AG04449 (cell line): ENCODE measurements at regions of chr4 and their contacts with region 1.

Region 1: GRCh38 chr4:41281038-41281634 is 24.4 kb downstream of the UCHL1 start:
- DNase-seq: peak; percentile 42
- H3K4me3 ChIP-seq: no peak overlapping the region
- CTCF ChIP-seq: peak; percentile 65

Region 2: GRCh38 chr4:41120297-41121217 is 160.6 kb before region 1 on chr4:
- CTCF ChIA-PET with region 1: no interaction called
- POLR2A ChIA-PET with region 1: no interaction called
- DNase-seq: no peak
- H3K4me3 ChIP-seq: no peak overlapping the region
- CTCF ChIP-seq: no peak

Region 3: GRCh38 chr4:41294445-41295062 is 13.4 kb after region 1 on chr4:
- CTCF ChIA-PET with region 1: interaction called, 21 read pairs
- POLR2A ChIA-PET with region 1: interaction called, 5 read pairs
- DNase-seq: no peak
- H3K4me3 ChIP-seq: no peak overlapping the region
- CTCF ChIP-seq: no peak

Region 4: GRCh38 chr4:41448934-41449333 is 167.8 kb after region 1 on chr4:
- CTCF ChIA-PET with region 1: no interaction called
- POLR2A ChIA-PET with region 1: no interaction called
- DNase-seq: no peak
- H3K4me3 ChIP-seq: no peak overlapping the region
- CTCF ChIP-seq: no peak

Region 5: DNA sequence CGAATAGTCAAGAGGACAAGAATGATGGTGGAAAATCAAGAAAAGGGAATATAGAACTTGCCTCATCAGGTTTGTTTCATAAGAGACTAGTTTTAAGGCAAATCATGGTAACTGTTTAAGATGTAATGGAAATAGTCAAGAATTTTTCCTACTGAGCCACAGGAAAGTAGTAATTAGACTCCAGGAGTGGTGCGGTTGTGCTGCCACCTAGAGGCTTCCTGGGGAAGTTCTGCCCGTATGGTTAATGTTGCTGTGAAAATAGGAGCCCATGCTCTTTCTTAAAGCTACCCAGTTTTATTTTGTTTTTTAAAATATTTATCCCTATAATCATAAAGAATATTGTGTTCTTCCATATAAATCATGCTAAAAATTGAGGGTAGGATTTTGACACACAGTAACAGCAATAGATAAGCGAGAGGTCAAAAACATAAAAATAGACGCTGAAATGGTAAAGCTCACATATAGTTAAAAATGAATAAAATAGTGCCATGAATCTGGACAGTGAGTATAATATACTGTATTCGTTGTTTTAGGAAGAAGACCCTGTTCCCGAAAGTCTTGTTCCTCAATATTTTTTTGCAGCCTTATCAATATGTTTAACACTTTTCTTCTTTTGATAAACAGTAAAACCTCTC is 380.4 kb after region 1 on chr4:
- CTCF ChIA-PET with region 1: interaction called, 256 read pairs
- POLR2A ChIA-PET with region 1: no interaction called
- DNase-seq: no peak
- H3K4me3 ChIP-seq: no peak overlapping the region
- CTCF ChIP-seq: peak; percentile 83

Region 6: GRCh38 chr4:41882625-41883347 is 601.6 kb after region 1 on chr4:
- CTCF ChIA-PET with region 1: interaction called, 34 read pairs
- POLR2A ChIA-PET with region 1: no interaction called
- DNase-seq: no peak
- H3K4me3 ChIP-seq: no peak overlapping the region
- CTCF ChIP-seq: peak; percentile 83